Activated CD8-positive, alpha-beta T cell treated with anti-CD3 and anti-CD28 coated beads, Interleukin-2, amount 10 ng/mL, durations not matched to agents 7 days and 5 days (primary cell): ENCODE measurements at regions of chr1 and their contacts with region 1.

Region 1: DNA sequence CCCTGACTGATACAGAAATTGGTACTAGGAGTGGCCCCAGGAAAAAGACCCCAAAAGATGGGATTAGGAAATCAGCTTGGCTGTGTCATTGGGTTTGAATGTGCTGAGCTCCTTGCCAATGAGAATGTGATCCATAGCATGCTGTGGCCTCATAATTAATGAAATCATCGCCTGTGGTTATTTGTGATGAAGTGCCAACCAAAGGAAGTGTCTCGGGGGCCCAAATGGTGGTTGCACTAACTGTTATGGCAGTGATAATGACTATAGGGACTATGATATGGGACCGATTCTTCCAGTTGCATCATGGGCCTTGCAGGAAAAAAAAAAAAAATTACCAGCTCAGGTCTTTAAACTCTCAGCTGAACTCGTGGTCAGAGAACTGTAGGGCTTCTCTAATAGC is 15.4 kb upstream of the ZDHHC18 start:
- DNase-seq: no peak
- ATAC-seq: no peak
- H3K4me3 Mint-ChIP-seq: no peak overlapping the region
- H3K27ac Mint-ChIP-seq: peak overlapping the region; percentile 74
- H3K4me1 Mint-ChIP-seq: peaks cover 21% of the 10 kb centered on the region
- H3K27me3 Mint-ChIP-seq: no peaks in the 10 kb centered on the region

Region 2: GRCh38 chr1:26666855-26667254 is 144.2 kb before region 1 on chr1:
- CTCF ChIA-PET with region 1: no interaction called
- POLR2A ChIA-PET with region 1: no interaction called
- DNase-seq: no peak
- ATAC-seq: no peak
- H3K4me3 Mint-ChIP-seq: no peak overlapping the region
- H3K27ac Mint-ChIP-seq: no peak overlapping the region
- H3K4me1 Mint-ChIP-seq: no peaks in the 10 kb centered on the region
- H3K27me3 Mint-ChIP-seq: no peaks in the 10 kb centered on the region

Region 3: GRCh38 chr1:26799479-26800142 is 11.4 kb before region 1 on chr1:
- CTCF ChIA-PET with region 1: interaction called, 76 read pairs
- POLR2A ChIA-PET with region 1: interaction called, 4 read pairs
- DNase-seq: peak; percentile 54
- ATAC-seq: peak; percentile 76
- H3K4me3 Mint-ChIP-seq: peak overlapping the region; percentile 74
- H3K27ac Mint-ChIP-seq: peak overlapping the region; percentile 90
- H3K4me1 Mint-ChIP-seq: peaks cover 51% of the 10 kb centered on the region
- H3K27me3 Mint-ChIP-seq: no peaks in the 10 kb centered on the region

Region 4: GRCh38 chr1:26826261-26827105 is 15.4 kb after region 1 on chr1 and contains the start of gene ZDHHC18:
- CTCF ChIA-PET with region 1: interaction called, 88 read pairs
- POLR2A ChIA-PET with region 1: no interaction called
- DNase-seq: peak; percentile 70
- ATAC-seq: peak; percentile 91
- H3K4me3 Mint-ChIP-seq: peak within 1 kb of the TSS; percentile 95
- H3K27ac Mint-ChIP-seq: peak within 1 kb of the TSS; percentile 92
- H3K4me1 Mint-ChIP-seq: peaks cover 55% of the 10 kb centered on the region
- H3K27me3 Mint-ChIP-seq: no peaks in the 10 kb centered on the region
- total RNA-seq, gene ZDHHC18: 47.6 to 50.9 TPM